ENCODE measurements at regions of chr13 and their contacts with region 1.

Region 1: GRCh38 chr13:21638319-21639282 is 32.3 kb upstream of the FGF9 start:
- DNase-seq: peak; percentile 76

Region 2: DNA sequence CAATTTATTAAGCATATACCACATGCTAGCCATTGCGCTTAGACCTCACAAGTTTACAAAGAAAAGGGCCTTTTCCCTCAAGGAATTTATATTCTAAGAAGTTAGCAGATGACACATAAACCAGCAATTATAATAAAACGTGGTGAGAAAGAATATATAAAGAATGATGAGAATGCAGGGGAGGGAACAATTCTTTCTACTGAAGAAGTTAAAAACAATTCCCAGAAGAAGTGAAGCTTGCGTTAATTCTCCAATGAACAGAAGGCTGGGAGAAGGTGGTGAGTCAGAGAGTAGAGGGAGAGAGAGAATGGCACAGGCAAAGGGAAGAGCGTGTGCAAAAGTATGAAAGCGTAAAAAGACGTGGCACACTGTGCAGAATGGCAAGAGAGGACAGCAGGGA is 110.0 kb before region 1 on chr13:
- in situ Hi-C with region 1: no loop called
- DNase-seq: no peak

Region 3: DNA sequence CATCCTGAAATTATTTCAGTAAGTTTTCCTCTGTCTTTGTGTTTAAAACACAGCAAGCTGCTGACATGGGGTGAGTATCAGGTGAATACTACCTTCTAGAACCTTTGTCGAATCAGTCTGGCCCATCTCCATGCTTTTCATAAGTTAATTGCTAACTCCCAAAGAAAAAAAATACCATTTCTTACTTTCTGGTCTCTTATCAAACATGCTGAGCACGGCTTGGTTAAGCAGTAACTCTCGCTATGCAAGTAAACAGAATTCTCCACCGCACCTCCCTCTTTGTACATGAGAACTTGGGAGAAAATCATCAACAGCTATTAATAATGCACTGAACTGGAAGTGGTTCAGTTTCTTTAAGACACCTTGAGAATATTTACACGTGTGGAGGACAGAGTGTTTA is 120.9 kb after region 1 on chr13:
- in situ Hi-C with region 1: no loop called
- DNase-seq: no peak

Region 4: GRCh38 chr13:22278336-22278929 is 639.8 kb after region 1 on chr13:
- in situ Hi-C with region 1: loop called (anchors 25 kb)
- DNase-seq: peak; percentile 83